Gastrocnemius medialis (tissue), 4 donors: ENCODE measurements at regions of chrX and their contacts with region 1.

Region 1: DNA sequence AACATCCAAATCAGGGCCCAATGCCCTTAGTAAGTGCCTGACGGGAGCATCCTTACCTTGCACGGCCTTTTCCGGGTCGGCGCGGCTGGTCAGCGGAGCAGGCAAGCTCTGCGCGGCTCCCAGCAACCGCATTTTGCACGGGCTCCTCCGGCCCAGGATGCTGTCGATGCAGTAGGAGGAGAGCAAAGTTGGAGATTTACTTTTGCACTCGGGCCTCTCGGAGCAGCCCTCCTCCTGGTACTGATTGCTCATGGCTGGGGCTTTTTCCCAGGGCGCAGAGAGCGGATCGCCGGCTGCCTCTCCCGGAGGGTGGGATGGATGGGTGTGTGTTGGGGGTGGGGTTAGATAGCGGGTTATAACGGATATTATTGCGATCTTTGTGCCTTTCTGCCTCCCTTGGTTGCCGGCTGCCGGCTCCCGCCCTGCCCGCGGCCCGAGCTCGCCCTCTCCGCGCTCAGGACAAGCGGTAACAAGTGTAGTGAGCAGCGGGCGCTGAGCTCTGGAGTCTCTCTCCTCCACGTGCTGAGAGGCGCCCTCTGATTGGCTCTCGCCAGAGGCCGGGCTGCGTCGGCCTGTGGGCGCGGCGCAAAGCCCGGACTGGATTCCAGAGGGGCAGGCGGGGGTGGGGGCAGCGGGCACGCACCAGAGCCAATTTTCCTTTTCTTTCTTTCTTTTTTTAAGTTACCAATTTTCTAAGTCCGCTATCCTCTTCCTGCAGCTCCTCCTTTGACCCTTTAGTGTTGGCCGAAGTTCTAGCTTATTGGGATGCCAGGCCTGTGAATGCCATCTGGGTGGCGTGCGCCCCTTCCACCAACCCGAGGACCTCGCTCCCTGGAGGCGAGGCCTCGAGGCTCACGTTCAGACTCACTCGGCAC is at the start of gene ARX:
- DNase-seq: peak; percentile 52 to 80
- ATAC-seq: peak; percentile 60 to 67
- H3K4me3 ChIP-seq: peak within 1 kb of the TSS; percentile 48 to 64 (median 56)
- H3K27ac ChIP-seq: peak within 1 kb of the TSS; percentile 79 to 91 (median 82)
- H3K4me1 ChIP-seq: peaks cover 12 to 13% of the 10 kb centered on the region in 2 donors
- H3K27me3 ChIP-seq: peaks cover 36 to 58% (median 57%) of the 10 kb centered on the region in 3 donors
- CTCF ChIP-seq: no peak
- POLR2A ChIP-seq: peak; percentile 65 to 66
- total RNA-seq, gene ARX: 2.3 to 5.1 (median 3.5) TPM

Region 2: DNA sequence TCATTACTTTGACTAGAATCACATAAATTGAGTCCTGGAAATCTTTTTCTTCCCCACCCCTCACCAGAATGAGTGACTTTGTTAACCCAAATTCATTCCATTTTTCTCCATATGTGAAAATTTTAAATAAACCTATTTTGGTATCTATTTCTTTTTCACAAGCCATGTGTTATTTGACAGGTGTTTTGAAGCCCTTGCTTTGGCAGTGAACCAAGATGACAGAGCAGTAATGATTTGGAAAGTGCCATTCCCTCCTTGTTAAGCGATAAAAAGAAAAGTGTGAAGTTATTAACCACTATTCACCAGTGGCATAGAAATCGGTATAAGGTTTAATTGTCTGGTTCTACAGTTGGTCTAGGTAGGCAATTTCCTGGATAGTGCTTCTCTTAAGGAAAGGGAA is 255.9 kb before region 1 on chrX:
- in situ Hi-C with region 1: loop called in 1 of 4 experiments (anchors 10 kb)
- intact Hi-C with region 1: loop called (anchors 5 kb)
- DNase-seq: no peak
- ATAC-seq: no peak
- H3K4me3 ChIP-seq: no peak overlapping the region
- H3K27ac ChIP-seq: peak overlapping the region; percentile 1 to 68 (median 46)
- H3K4me1 ChIP-seq: peaks cover 7 to 9% of the 10 kb centered on the region in 2 donors
- H3K27me3 ChIP-seq: no peaks in the 10 kb centered on the region
- CTCF ChIP-seq: no peak
- POLR2A ChIP-seq: no peak

Region 3: GRCh38 chrX:25034889-25035288 is 19.2 kb after region 1 on chrX:
- in situ Hi-C with region 1: no loop called
- intact Hi-C with region 1: no loop called
- DNase-seq: no peak
- ATAC-seq: no peak
- H3K4me3 ChIP-seq: no peak overlapping the region
- H3K27ac ChIP-seq: no peak overlapping the region
- H3K4me1 ChIP-seq: no peaks in the 10 kb centered on the region
- H3K27me3 ChIP-seq: no peaks in the 10 kb centered on the region
- CTCF ChIP-seq: no peak
- POLR2A ChIP-seq: no peak